GM18951 (cell line): ENCODE measurements at regions of chr14 and their contacts with region 1.

Region 1: DNA sequence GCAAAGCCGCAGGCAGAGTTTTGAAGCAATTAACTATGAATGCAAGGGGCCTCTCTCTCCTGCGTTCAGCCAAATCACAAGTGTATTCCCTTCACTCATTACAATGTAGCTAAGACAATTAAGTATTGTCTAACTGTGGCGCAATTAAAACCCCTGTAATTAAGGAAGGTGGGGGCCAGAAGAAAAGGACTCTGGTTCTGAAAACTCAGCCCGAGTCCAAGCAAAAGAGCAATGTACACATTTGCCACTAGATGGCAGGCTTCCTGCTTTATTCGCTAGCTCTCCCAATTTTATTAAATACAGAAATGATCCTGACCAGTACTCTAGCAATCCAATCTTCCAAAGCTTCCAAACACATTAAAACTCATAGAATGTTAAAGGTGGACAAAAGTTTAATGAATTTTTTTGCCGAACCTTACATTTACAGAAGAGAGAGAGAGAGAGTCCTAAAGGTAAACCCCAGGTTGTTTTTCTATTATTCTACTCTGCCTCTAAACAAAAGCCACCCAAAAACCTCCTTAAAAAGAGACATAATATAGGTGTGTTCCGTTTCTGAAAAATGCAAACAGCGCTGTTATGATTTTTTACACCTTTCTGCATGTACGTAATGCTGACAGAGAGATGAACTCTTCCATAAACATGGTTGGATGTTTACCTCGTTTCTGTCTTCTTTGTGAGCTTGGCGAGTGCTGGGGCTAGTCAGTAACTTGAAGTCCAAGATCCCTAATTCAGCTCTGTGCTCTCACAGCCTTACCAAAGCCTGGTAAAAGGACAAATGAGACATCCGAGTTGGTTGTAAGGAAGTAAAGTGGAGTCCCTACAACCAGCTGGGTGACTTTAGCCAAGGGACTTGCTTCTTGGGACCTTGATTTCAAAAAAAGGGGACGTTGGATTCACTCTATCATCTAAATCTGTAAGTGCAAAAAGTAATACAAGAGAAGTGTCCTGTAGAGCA is 50.9 kb upstream of the VASH1 start:
- POLR2A ChIP-seq: no peak

Region 2: GRCh38 chr14:76793956-76794355 is 83.6 kb after region 1 on chr14:
- in situ Hi-C with region 1: loop called (anchors 5 kb)
- POLR2A ChIP-seq: no peak